HCT116 (cell line): ENCODE measurements at regions of chr16 and their contacts with region 1.

Region 1: GRCh38 chr16:23678430-23679273 is at the start of gene PLK1:
- DNase-seq: peak; percentile 76
- ATAC-seq: peak; percentile 93
- H3K4me3 ChIP-seq: peak within 1 kb of the TSS; percentile 96 to 99
- H3K27ac ChIP-seq: peak within 1 kb of the TSS; percentile 61
- H3K4me1 ChIP-seq: peaks cover 7 to 21% of the 10 kb centered on the region in 2 experiments; a peak in 3 of 4 replicates
- H3K27me3 ChIP-seq: no peaks in the 10 kb centered on the region
- CTCF ChIP-seq: peak; percentile 35 to 66 (median 42); a peak in 5 of 6 replicates
- POLR2A ChIP-seq: no peak
- RAD21 ChIP-seq: peak; percentile 63
- total RNA-seq, gene PLK1: 144 TPM

Region 2: GRCh38 chr16:23556881-23557778 is 121.5 kb before region 1 on chr16 and contains the starts of genes EARS2 and UBFD1:
- CTCF ChIA-PET with region 1: no interaction called
- POLR2A ChIA-PET with region 1: no interaction called
- RAD21 ChIA-PET with region 1: no interaction called
- intact Hi-C with region 1: no loop called
- DNase-seq: peak; percentile 97
- ATAC-seq: peak; percentile 92
- H3K4me3 ChIP-seq: peak within 1 kb of the TSS; percentile 69 to 73
- H3K27ac ChIP-seq: peak within 1 kb of the TSS; percentile 81
- H3K4me1 ChIP-seq: peaks cover 9 to 20% of the 10 kb centered on the region in 2 experiments
- H3K27me3 ChIP-seq: no peaks in the 10 kb centered on the region
- CTCF ChIP-seq: peak; percentile 79 to 94 (median 89)
- POLR2A ChIP-seq: peak; percentile 83
- RAD21 ChIP-seq: peak; percentile 57
- total RNA-seq, gene EARS2: 35.6 TPM
- total RNA-seq, gene UBFD1: 89.6 TPM

Region 3: GRCh38 chr16:24015923-24016322 is 337.3 kb after region 1 on chr16:
- CTCF ChIA-PET with region 1: interaction called, 4 read pairs
- POLR2A ChIA-PET with region 1: no interaction called
- RAD21 ChIA-PET with region 1: no interaction called
- intact Hi-C with region 1: loop called (anchors 5 kb)
- DNase-seq: no peak
- ATAC-seq: peak; percentile 42; the same call in 1 of the 2 replicates
- H3K4me3 ChIP-seq: no peak overlapping the region
- H3K27ac ChIP-seq: no peak overlapping the region
- H3K4me1 ChIP-seq: no peaks in the 10 kb centered on the region
- H3K27me3 ChIP-seq: no peaks in the 10 kb centered on the region
- CTCF ChIP-seq: no peak
- POLR2A ChIP-seq: no peak
- RAD21 ChIP-seq: no peak

Region 4: DNA sequence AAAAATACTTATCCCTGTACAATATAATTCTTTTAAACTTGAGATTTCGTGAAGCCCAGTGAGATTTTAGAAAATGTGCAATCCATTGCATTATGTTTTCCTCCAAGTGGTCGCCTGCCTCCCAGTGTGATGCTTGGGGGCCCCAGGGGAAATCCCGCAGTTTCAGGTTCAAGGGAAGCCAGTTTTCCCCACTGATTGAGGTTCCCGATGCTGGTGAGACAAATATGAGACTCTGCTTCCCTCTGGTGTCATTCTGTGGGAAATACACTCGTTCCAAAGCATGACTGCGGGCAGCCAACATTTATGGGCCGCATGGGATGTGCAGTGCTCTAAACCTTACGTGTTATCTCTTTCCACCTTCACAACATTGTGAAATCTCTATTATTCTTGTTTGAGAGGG is 358.0 kb after region 1 on chr16:
- CTCF ChIA-PET with region 1: interaction called, 3 read pairs
- POLR2A ChIA-PET with region 1: no interaction called
- RAD21 ChIA-PET with region 1: no interaction called
- intact Hi-C with region 1: loop called (anchors 5 kb)
- DNase-seq: peak; percentile 29
- ATAC-seq: peak; percentile 86
- H3K4me3 ChIP-seq: no peak overlapping the region
- H3K27ac ChIP-seq: no peak overlapping the region
- H3K4me1 ChIP-seq: no peaks in the 10 kb centered on the region
- H3K27me3 ChIP-seq: no peaks in the 10 kb centered on the region
- CTCF ChIP-seq: peak; percentile 61 to 79 (median 65)
- POLR2A ChIP-seq: no peak
- RAD21 ChIP-seq: peak; percentile 88